ENCODE measurements at regions of chr7 and their contacts with region 1.

Region 1: GRCh38 chr7:2947058-2947780 is 96.4 kb downstream of the CARD11 start:
- DNase-seq: no peak
- H3K4me3 ChIP-seq: no peak overlapping the region
- H3K27me3 ChIP-seq: no peaks in the 10 kb centered on the region
- CTCF ChIP-seq: no peak

Region 2: GRCh38 chr7:2934211-2934731 is 12.9 kb before region 1 on chr7:
- CTCF ChIA-PET with region 1: no interaction called
- POLR2A ChIA-PET with region 1: no interaction called
- DNase-seq: peak; percentile 4
- H3K4me3 ChIP-seq: no peak overlapping the region
- H3K27me3 ChIP-seq: no peaks in the 10 kb centered on the region
- CTCF ChIP-seq: no peak

Region 3: DNA sequence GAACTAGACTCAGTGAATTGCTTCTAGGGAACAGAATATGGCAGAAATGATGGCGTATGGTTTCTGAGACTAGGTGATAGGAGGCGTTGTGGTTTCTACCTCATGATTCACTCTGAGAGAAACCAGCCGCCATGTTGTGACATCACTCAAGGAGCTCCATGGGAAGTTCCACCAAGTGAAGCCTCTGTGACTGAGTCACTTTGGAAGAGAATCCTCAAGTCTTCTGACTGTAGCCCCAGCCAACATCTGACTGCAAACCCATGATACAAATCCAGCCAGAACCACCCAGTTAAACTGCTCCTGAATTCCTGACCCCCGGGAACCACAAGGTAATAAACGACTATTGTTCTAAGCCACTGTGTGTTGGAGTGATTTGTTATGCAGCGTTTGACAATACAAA is 187.5 kb after region 1 on chr7:
- CTCF ChIA-PET with region 1: no interaction called
- POLR2A ChIA-PET with region 1: interaction called, 16 read pairs
- DNase-seq: no peak
- H3K4me3 ChIP-seq: no peak overlapping the region
- H3K27me3 ChIP-seq: no peaks in the 10 kb centered on the region
- CTCF ChIP-seq: no peak